ENCODE measurements at regions of chr15 and their contacts with region 1.

Region 1: DNA sequence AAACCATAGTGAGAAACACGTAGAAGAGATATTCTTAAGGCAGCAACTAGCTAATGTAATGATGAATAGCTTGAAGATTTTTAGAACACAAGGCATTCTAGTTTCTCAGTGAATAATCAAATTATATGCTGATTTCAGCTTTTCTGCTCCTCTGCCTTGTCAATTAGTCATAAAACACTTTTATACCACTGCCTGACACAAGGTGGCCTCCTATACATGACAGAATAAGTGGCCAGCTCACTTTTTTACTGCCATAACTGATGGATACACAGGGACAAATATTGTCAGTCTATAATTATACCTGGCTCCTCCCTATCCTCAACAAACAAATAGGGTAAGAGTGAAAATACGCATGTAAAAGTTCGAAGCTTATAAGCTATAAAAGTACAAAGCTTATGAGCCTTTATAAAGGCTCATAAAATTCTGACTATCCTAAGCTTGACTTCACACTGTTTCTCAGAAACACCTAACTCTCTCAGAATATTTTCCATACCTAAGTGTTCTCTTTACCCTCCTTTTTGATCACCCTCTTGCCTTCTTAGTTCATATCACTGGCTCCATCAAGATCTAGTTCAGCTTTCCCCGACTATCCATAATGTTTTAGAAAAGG is 81.6 kb downstream of the HERC1 start:
- DNase-seq: peak in 7 of 9 experiments; percentile 18 to 75 (median 28)
- ATAC-seq: peak; percentile 86
- H3K4me3 ChIP-seq: no peak overlapping the region
- H3K4me3 Mint-ChIP-seq: no peak overlapping the region
- H3K27ac ChIP-seq: no peak overlapping the region
- H3K27ac Mint-ChIP-seq: peak overlapping the region; percentile 78
- H3K4me1 ChIP-seq: no peaks in the 10 kb centered on the region
- H3K4me1 Mint-ChIP-seq: peaks cover 6% of the 10 kb centered on the region
- H3K27me3 ChIP-seq: no peaks in the 10 kb centered on the region
- H3K27me3 Mint-ChIP-seq: no peaks in the 10 kb centered on the region
- CTCF ChIP-seq: peak; percentile 85

Region 2: DNA sequence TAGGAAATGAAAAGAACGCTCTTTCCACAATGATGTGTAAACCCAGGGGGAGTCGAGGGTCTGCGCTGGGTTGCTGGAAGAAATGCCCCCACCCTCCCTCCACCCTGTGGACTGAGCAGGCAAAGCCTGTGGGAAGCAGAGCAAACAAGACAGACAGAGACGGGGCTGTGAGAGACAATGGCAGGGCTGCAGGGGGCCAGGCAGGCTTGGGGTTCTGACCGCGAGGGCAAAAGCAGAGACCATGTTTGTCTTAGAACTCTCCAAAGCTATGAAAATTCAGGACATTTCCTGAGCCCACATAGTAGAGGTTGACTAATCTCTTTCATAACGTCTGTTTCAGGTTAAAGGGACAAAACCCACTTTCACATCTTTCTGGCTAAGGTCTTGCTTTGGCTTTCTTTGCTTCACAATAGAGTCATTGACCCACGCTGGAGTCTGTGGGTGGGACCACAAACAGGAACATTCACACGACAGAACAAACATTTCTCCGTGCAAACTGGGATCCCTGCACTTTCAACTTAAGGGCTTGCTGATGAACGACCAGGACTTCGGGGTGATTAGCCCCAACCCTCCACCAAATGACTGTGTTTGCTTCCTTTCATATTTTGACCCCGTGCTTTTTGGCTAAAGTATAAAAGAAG is 865.6 kb before region 1 on chr15:
- CTCF ChIA-PET with region 1: no interaction called
- POLR2A ChIA-PET with region 1: no interaction called
- intact Hi-C with region 1: no loop called
- DNase-seq: no peak
- ATAC-seq: no peak
- H3K4me3 ChIP-seq: no peak overlapping the region
- H3K4me3 Mint-ChIP-seq: no peak overlapping the region
- H3K27ac ChIP-seq: no peak overlapping the region
- H3K27ac Mint-ChIP-seq: no peak overlapping the region
- H3K4me1 ChIP-seq: no peaks in the 10 kb centered on the region
- H3K4me1 Mint-ChIP-seq: no peaks in the 10 kb centered on the region
- H3K27me3 ChIP-seq: no peaks in the 10 kb centered on the region
- H3K27me3 Mint-ChIP-seq: peaks cover 23% of the 10 kb centered on the region
- CTCF ChIP-seq: no peak

Region 3: GRCh38 chr15:63322541-63322940 is 429.6 kb before region 1 on chr15:
- CTCF ChIA-PET with region 1: no interaction called
- POLR2A ChIA-PET with region 1: no interaction called
- intact Hi-C with region 1: no loop called
- DNase-seq: no peak
- ATAC-seq: no peak
- H3K4me3 ChIP-seq: no peak overlapping the region
- H3K4me3 Mint-ChIP-seq: no peak overlapping the region
- H3K27ac ChIP-seq: no peak overlapping the region
- H3K27ac Mint-ChIP-seq: no peak overlapping the region
- H3K4me1 ChIP-seq: no peaks in the 10 kb centered on the region
- H3K4me1 Mint-ChIP-seq: no peaks in the 10 kb centered on the region
- H3K27me3 ChIP-seq: no peaks in the 10 kb centered on the region
- H3K27me3 Mint-ChIP-seq: no peaks in the 10 kb centered on the region
- CTCF ChIP-seq: no peak

Region 4: DNA sequence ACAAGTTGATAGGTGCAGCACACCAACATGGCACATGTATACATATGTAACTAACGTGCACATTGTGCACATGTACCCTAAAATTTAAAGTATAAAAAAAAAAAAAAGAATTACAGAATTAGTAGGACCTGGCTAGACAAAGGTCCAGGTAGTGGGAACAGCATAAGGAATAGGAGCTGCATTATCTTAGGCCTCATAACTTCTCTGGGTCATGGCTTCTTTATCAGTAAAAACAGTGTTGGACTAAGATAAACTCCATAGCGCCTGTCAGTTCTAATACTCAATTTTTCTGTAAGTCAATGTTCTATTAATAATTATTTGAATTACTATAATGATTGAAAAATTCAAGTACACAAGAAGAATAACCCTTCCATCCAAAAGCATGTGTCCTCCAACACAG is 16.7 kb before region 1 on chr15:
- CTCF ChIA-PET with region 1: interaction called, 18 read pairs
- POLR2A ChIA-PET with region 1: no interaction called
- intact Hi-C with region 1: no loop called
- DNase-seq: no peak
- ATAC-seq: no peak
- H3K4me3 ChIP-seq: no peak overlapping the region
- H3K4me3 Mint-ChIP-seq: no peak overlapping the region
- H3K27ac ChIP-seq: no peak overlapping the region
- H3K27ac Mint-ChIP-seq: no peak overlapping the region
- H3K4me1 ChIP-seq: no peaks in the 10 kb centered on the region
- H3K4me1 Mint-ChIP-seq: peaks cover 6% of the 10 kb centered on the region
- H3K27me3 ChIP-seq: no peaks in the 10 kb centered on the region
- H3K27me3 Mint-ChIP-seq: no peaks in the 10 kb centered on the region
- CTCF ChIP-seq: no peak

Region 5: GRCh38 chr15:64180235-64180837 is 428.2 kb after region 1 on chr15:
- CTCF ChIA-PET with region 1: no interaction called
- POLR2A ChIA-PET with region 1: no interaction called
- intact Hi-C with region 1: no loop called
- DNase-seq: peak in 1 of 9 experiments; percentile 24
- ATAC-seq: no peak
- H3K4me3 ChIP-seq: no peak overlapping the region
- H3K4me3 Mint-ChIP-seq: no peak overlapping the region
- H3K27ac ChIP-seq: no peak overlapping the region
- H3K27ac Mint-ChIP-seq: no peak overlapping the region
- H3K4me1 ChIP-seq: no peaks in the 10 kb centered on the region
- H3K4me1 Mint-ChIP-seq: no peaks in the 10 kb centered on the region
- H3K27me3 ChIP-seq: no peaks in the 10 kb centered on the region
- H3K27me3 Mint-ChIP-seq: no peaks in the 10 kb centered on the region
- CTCF ChIP-seq: no peak

Measured in CD8-positive, alpha-beta T cell (primary cell).